Mucosa of descending colon (tissue), 3 donors: ENCODE measurements at regions of chr1 and their contacts with region 1.

Region 1: DNA sequence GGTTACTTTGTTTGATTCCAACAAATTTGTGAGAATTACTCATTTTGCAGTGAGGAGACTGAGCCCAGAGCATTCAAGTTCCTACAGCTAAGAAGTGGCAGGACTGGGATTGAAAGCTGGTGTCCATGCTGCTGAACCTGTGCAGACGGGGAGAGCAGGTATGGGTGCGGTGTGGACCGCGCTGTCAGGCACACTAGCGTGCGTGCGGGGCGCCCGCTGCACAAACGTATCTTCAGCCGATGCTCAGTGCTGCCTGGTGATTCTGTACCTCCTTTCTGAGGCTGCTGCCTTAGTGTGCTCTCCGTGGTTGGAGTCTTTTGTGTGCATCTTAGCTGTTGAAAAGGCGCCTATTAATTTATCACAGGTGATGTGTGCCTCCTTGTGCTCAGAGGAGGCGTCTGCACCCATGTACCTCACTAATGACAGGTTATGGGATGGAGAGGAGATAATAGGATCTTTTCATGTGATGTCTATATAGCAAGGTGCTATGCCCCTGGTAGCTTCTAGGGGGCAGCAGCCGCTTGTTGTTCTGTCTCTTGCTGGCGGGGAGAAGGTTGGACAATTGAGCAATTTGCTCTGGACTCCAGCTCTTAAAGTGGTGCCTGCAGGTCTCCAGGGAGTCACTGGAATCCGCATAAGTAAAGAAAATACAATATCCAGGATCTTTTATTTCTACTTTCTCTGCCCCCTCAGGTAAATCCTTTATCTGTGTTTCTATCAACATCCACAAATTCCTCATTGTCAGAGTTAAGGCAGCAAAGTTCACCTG is 32.5 kb downstream of the PEX14 start:
- DNase-seq: peak in 2 of 3 donors; percentile 58 to 64
- ATAC-seq: peak; percentile 77
- H3K4me3 ChIP-seq: no peak overlapping the region
- H3K4me1 ChIP-seq: peaks cover 35% of the 10 kb centered on the region
- CTCF ChIP-seq: peak; percentile 68

Region 2: DNA sequence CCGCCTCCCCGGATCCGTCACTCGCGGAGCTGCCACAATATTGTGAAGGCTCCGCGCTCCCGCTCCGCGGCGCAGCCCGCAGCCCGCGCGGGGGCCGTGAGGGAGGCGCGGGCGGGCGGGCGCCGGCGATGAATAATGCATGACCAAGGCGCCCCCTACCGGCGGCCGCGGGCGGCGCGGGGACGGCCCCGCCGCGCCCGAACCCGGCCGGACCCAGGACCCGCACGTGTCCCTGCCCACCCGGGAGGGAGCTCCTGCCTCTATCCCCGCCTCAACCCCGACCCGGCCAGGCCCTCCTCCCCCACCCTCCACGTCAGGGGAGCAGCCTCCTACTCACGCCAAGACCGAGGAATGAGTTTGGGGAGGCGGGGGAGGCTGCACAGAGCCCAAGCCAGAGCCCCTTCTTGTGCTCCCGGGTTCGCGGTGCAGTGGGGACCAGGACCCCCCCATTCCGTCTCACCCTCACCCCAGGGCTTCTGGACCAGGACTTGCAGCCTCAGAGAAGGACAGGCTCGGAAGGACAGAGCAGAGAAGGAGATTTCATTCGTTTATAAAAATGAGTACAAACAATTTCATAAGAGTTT is 359.9 kb after region 1 on chr1:
- intact Hi-C with region 1: loop called (anchors 5 to 10 kb)
- DNase-seq: peak; percentile 56 to 78 (median 75)
- ATAC-seq: peak; percentile 95
- H3K4me3 ChIP-seq: no peak overlapping the region
- H3K4me1 ChIP-seq: peaks cover 7% of the 10 kb centered on the region
- CTCF ChIP-seq: peak; percentile 76